BJ (cell line): ENCODE measurements at regions of chr2 and their contacts with region 1.

Region 1: DNA sequence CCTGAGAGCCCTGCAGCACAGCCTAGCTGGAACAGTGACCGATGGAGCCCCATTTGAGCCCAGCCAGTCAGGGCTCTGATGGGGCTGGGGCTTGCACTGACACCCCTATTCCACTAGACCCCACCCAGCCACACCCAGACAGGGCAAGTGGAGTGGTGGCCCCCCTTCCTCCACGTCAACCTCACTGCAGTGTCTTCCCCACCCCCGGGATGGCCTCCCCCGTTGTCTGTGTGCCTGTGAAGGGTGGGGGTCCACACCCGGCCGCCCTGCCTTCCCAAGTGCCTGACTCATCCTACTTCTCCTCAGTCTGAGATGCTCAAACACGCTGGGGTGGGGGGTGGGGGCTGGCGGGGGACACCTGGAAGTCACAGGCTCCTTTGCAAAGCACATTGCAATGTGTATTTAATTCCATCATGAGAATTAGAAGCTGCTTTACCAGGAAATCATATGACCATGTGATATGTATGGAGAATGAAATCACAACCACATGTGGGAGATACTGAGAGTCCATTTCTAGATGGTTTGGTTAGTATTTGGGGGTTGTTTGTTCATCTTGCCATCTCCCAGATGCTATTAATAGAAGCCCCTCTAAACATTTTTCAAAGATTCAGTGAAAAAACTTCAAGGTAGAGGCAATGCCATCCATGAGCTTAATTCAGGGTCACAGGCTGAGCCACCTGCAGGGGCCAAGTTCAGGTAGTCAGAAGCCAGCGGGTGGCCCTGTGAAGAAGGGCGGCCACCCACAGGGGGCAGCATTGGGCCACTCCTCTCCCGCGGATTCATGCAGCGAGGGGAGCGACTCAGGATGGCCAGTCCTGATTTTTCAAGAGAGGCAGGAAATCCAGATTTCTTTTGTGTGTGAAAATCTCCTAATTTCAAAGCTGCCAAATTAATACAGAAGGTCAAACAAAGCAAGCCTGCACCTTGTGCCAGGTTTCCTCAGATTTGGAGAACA is 22.7 kb upstream of the GMPPA start:
- DNase-seq: no peak
- H3K4me3 ChIP-seq: no peak overlapping the region
- H3K27me3 ChIP-seq: no peaks in the 10 kb centered on the region
- CTCF ChIP-seq: peak; percentile 93

Region 2: DNA sequence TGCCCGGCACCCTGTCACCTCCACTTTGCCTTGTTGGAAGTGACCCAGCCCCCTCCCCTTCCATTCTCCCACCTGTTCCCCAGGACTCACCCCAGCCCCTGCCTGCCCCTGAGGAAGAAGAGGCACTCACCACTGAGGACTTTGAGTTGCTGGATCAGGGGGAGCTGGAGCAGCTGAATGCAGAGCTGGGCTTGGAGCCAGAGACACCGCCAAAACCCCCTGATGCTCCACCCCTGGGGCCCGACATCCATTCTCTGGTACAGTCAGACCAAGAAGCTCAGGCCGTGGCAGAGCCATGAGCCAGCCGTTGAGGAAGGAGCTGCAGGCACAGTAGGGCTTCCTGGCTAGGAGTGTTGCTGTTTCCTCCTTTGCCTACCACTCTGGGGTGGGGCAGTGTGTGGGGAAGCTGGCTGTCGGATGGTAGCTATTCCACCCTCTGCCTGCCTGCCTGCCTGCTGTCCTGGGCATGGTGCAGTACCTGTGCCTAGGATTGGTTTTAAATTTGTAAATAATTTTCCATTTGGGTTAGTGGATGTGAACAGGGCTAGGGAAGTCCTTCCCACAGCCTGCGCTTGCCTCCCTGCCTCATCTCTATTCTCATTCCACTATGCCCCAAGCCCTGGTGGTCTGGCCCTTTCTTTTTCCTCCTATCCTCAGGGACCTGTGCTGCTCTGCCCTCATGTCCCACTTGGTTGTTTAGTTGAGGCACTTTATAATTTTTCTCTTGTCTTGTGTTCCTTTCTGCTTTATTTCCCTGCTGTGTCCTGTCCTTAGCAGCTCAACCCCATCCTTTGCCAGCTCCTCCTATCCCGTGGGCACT is 293.4 kb before region 1 on chr2:
- CTCF ChIA-PET with region 1: no interaction called
- POLR2A ChIA-PET with region 1: no interaction called
- DNase-seq: no peak
- H3K4me3 ChIP-seq: no peak overlapping the region
- H3K27me3 ChIP-seq: no peaks in the 10 kb centered on the region
- CTCF ChIP-seq: no peak

Region 3: DNA sequence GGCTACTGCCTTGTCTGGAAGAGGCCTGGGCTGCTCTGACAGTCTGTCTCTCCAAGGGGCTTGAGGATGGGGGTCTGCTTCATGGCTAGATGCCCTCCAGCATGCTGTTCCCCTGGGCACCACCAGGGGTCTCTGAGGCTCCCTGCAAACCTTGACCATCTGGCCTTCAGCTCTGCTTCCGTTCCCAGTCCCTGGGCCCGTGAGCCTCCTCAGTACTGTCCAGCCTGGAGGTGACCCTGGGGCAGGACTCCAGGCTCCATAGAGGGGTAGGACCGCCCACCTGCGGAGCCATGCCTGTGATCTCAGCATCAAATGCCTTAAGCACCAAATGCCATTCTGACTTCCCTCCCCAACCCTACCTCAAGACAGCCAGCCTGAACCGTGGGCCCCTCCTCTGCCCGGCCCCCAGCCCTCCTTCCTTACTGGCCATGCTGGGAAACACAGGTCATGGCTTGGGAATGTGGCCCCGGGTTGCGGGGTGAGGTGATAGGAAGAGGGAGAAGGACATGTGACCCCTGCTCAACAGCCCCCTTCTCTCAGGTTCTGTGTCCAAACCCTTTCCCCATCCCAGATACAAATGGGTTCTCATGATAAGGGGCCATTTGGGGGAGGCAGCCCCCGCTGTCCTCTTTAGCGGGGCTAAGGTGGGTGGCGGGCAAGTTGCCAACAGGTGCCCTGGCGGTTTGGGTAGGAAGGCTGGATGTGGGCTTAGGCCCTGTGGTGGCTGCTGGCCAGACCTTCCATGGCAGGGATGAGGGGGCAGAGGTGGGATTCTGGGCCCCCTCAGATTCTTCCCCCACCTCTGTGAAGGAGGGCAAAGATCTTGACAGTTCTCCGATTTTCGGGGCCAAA is 16.3 kb before region 1 on chr2:
- CTCF ChIA-PET with region 1: interaction called, 13 read pairs
- POLR2A ChIA-PET with region 1: no interaction called
- DNase-seq: no peak
- H3K4me3 ChIP-seq: no peak overlapping the region
- H3K27me3 ChIP-seq: no peaks in the 10 kb centered on the region
- CTCF ChIP-seq: peak; percentile 98

Region 4: GRCh38 chr2:219509780-219510511 is 34.0 kb after region 1 on chr2:
- CTCF ChIA-PET with region 1: interaction called, 12 read pairs
- POLR2A ChIA-PET with region 1: no interaction called
- DNase-seq: no peak
- H3K4me3 ChIP-seq: peak overlapping the region; percentile 11
- H3K27me3 ChIP-seq: peaks cover 25% of the 10 kb centered on the region
- CTCF ChIP-seq: peak; percentile 87

Region 5: DNA sequence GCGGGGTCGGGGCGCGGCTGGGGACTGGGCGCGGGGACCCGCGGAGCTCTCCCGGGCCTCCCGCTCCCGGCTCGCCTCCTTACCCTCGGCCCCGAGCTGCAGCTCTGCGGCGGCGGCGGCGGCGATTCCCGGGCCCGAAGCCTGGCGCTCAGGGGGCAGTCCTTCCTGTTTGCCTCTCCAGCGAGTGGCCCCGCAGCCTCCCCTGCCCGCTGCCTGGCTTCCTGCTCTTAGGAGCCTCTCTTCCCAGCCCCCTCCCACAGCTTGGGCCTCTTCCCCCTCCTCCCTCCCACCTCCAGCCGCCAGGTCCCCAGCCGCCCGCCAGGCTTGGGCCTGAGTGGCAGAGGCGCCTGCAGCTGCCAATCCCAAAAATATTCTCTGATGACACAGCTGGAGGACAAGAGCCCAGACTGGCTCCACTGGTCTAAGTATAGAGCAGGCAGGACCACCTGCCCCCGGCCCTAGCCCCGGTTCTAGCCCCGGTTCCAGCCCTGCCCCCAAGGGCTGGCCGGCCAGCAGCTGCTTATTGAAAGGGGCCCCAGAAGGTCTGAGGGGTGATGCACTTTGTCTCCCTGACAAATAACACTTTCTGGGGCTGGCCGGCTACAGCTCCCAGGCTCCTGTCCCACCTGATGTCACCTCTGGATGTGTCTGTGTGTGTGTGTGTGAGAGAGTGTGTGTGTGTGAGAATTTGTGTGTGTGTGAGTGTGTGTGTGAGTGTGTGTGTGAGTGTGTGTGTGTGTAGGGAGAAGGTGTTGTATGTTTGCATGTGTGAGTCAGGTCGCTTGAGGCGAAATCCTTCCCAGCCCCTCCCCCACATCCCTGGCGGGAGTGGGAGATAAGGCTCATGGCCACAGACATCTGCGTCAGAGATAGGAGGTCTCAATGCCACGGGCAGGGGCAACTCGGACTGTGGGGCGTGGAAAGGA is 95.6 kb after region 1 on chr2 and contains the start of gene OBSL1:
- CTCF ChIA-PET with region 1: no interaction called
- POLR2A ChIA-PET with region 1: no interaction called
- DNase-seq: no peak
- H3K4me3 ChIP-seq: peak within 1 kb of the TSS; percentile 76
- H3K27me3 ChIP-seq: peaks cover 5% of the 10 kb centered on the region
- CTCF ChIP-seq: no peak
- polyA plus RNA-seq, gene OBSL1: 47.2 and 75.9 TPM in 2 replicates

Region 6: DNA sequence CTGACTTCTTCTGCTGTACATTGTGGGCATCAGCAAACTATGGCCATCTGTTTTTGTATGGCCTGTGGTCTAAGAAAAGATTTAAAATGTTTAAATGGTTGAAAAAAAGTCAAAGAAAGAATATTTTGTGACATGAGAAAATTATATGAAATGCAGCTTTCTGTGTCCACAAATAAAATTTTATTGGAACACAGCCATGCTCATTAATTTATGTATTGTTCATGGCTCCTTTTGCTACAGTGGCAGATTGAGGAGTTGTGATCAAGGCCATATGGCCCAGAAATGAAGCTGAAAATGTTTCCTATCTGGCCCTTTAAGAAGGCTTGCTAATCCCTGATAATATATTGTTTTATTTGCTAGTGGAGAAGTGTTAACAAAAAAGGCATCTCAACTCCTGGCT is 313.5 kb after region 1 on chr2:
- CTCF ChIA-PET with region 1: no interaction called
- POLR2A ChIA-PET with region 1: no interaction called
- DNase-seq: no peak
- H3K4me3 ChIP-seq: no peak overlapping the region
- H3K27me3 ChIP-seq: no peaks in the 10 kb centered on the region
- CTCF ChIP-seq: no peak